ENCODE measurements at regions of chr2 and their contacts with region 1.

Region 1: DNA sequence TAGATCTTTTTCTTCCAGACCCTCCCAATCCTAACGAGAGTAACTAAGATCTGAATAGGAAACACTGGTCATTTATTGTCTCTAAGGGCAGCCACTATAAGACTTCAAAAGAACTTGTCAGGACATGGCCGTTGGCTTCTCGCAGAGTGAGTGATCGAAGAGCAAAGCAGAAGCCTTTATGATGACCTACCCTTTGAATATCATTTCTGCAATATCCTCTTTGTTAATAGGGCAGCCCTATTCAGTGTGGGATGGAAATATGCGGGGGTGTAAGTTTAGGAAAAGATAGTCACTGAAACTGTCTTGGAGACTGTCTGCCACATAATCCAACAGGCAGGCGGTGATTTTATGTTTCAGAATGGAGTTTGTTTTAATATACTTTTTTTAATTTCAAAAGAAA is 70.9 kb downstream of the FBXO36 start:
- DNase-seq: no peak
- ATAC-seq: no peak
- H3K4me3 ChIP-seq: no peak overlapping the region
- H3K27ac ChIP-seq: no peak overlapping the region
- H3K4me1 ChIP-seq: no peaks in the 10 kb centered on the region
- H3K27me3 ChIP-seq: no peaks in the 10 kb centered on the region
- CTCF ChIP-seq: no peak

Region 2: GRCh38 chr2:230053753-230054478 is 60.7 kb after region 1 on chr2:
- CTCF ChIA-PET with region 1: no interaction called
- POLR2A ChIA-PET with region 1: interaction called, 10 read pairs
- intact Hi-C with region 1: no loop called
- DNase-seq: peak; percentile 85
- ATAC-seq: peak; percentile 88
- H3K4me3 ChIP-seq: no peak overlapping the region
- H3K27ac ChIP-seq: peak overlapping the region; percentile 79
- H3K4me1 ChIP-seq: peaks cover 27% of the 10 kb centered on the region
- H3K27me3 ChIP-seq: no peaks in the 10 kb centered on the region
- CTCF ChIP-seq: no peak

Measured in PC-3 (cell line).